Mucosa of descending colon (tissue), 3 donors: ENCODE measurements at regions of chr3 and their contacts with region 1.

Region 1: GRCh38 chr3:124467980-124468902 is 262.0 kb upstream of the UMPS start:
- DNase-seq: peak in 2 of 3 donors; percentile 55 to 72
- ATAC-seq: peak; percentile 97
- H3K4me3 ChIP-seq: no peak overlapping the region
- H3K4me1 ChIP-seq: no peaks in the 10 kb centered on the region
- CTCF ChIP-seq: peak; percentile 84

Region 2: DNA sequence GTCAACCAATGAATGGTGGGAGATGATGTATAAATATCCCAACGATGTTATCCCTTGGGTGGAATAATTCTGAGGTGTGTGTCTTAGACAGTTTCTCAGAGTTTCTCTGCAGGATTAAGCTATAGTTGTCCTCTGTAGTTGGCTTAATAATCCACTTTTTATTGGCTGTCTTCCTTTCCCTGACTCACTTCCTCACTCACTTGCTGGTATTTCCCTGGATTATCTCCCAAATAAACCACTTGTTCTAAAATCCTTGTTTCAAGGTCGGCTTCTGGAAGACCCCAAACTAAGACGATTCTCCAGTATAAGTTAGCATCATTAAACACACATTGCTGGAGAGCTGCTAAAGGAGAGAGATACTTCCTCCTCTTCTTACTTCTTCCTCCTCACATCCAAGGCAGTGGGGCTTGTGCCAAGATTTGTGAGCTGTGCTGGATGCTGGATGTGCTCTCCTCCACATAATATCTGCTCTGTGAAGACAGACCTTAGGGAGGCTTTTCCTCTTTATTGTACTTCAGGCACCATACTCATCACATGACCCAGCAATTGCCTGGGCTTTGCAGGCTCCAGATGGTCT is 453.8 kb before region 1 on chr3:
- intact Hi-C with region 1: loop called in 1 of 2 experiments (anchors 10 kb)
- DNase-seq: no peak
- ATAC-seq: no peak
- H3K4me3 ChIP-seq: no peak overlapping the region
- H3K4me1 ChIP-seq: no peaks in the 10 kb centered on the region
- CTCF ChIP-seq: no peak

Region 3: DNA sequence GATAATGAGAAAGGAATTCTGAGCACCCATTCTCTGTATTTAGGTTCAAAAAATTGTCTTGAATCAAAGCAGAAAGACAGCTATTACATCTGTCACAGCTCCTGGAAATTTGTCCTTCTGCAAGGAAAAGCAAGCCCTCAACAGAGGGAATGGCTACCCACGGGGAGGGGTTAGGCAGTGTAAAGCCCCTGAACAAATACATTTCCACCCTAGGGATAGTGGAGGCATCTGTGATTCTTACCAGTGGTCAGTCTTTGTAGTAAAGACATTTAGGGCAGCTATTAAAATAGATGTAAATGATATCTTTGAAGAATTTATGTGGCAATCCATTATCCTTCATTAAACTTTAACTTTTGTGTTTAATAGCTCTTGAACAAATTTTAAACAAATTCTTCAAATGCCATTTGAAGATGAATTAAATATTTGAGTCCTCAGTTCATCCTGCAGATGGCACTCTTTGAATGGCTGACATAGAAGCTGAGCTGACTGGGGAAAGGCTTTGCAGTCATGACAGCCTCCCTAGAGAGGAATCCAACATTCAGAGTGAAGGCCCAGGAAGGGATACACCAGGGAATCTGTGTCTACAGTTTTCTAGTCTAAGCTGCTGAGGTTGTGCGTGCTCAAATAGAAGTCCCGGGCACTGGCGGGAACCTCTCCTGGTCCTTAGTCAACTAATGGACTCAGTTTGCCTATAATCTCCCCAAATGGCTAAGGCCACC is 116.7 kb before region 1 on chr3:
- intact Hi-C with region 1: loop called (anchors 5 to 10 kb)
- DNase-seq: peak in 1 of 3 donors; percentile 50
- ATAC-seq: peak; percentile 76
- H3K4me3 ChIP-seq: no peak overlapping the region
- H3K4me1 ChIP-seq: no peaks in the 10 kb centered on the region
- CTCF ChIP-seq: no peak